BJ (cell line): ENCODE measurements at regions of chr5 and their contacts with region 1.

Region 1: GRCh38 chr5:17132444-17133083 is 84.9 kb upstream of the BASP1 start:
- DNase-seq: no peak
- H3K4me3 ChIP-seq: no peak overlapping the region
- H3K27me3 ChIP-seq: no peaks in the 10 kb centered on the region
- CTCF ChIP-seq: peak; percentile 58

Region 2: DNA sequence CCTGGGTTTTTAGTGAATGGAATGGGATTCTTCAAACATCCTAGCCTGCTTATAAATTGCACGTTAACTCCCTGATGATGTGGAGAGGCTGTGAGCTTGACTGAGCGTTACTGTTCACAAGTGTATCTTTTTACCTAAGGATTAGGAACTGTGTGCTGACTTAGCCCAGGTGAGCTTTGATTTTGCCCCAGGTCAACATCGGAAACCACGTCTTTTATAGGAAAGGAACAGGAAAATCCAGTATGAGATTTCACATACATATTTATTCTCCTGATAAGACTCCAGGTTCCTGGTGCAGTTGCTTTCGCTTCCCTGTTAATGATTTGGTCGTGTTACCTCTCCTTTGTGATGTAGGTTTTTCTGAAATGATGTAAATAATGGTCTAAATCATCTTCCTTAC is 18.3 kb before region 1 on chr5:
- CTCF ChIA-PET with region 1: interaction called, 12 read pairs
- POLR2A ChIA-PET with region 1: no interaction called
- DNase-seq: no peak
- H3K4me3 ChIP-seq: no peak overlapping the region
- H3K27me3 ChIP-seq: no peaks in the 10 kb centered on the region
- CTCF ChIP-seq: no peak

Region 3: DNA sequence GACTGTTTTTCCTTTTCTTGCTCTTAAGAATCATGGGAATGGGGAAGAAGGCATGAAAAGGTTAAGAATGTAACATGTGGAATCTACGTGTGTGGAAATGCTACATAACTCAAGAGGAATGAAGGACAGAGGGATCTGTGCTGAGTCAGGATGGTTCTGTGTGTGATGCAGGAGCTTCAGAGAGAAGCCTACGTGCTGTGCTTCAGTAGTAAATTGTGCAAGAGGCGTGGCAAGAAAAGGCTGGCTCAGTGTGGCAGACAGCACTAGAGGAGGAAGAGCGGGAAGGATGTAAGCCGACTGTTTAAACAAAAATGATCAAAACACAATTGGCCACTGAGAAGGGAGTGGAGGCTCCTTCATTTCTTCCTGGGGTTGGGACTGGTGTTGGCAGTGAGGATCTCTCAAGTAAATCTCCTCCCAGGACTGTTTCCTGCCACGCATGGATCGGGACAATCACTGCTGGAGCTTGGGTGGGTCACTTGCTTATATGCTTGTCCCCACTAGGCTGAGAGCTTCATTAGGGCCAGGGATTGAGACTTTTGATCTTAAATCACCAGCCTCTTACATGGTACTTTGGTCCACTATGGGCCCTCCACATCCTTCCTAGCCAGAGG is 25.5 kb after region 1 on chr5:
- CTCF ChIA-PET with region 1: interaction called, 71 read pairs
- POLR2A ChIA-PET with region 1: no interaction called
- DNase-seq: peak; percentile 95
- H3K4me3 ChIP-seq: no peak overlapping the region
- H3K27me3 ChIP-seq: no peaks in the 10 kb centered on the region
- CTCF ChIP-seq: no peak

Region 4: GRCh38 chr5:17169507-17169906 is 36.9 kb after region 1 on chr5:
- CTCF ChIA-PET with region 1: interaction called, 13 read pairs
- POLR2A ChIA-PET with region 1: no interaction called
- DNase-seq: peak; percentile 95
- H3K4me3 ChIP-seq: no peak overlapping the region
- H3K27me3 ChIP-seq: no peaks in the 10 kb centered on the region
- CTCF ChIP-seq: no peak